Calu3 (cell line): ENCODE measurements at regions of chr21 and their contacts with region 1.

Region 1: DNA sequence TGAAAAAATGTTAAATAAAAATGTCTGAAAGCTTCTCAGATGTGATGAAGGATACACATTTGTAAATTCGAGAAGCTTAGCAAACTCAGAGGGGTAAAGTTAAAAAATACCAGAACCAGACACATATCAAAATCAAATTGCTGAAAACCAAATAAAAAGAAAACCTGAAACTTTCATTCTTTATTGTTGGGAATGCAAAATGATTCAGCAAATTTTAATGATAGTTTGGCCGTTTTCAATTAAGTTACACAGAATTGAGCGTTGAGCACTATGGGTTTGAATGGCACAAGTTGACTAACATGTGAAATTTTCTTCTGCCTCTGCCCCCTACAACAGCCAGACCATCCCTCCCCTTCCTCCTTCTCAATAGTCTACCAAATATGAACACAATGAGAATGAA is 33.5 kb upstream of the GRIK1 start:
- DNase-seq: no peak
- H3K4me3 Mint-ChIP-seq: no peak overlapping the region
- H3K27ac Mint-ChIP-seq: no peak overlapping the region
- H3K4me1 Mint-ChIP-seq: no peaks in the 10 kb centered on the region
- H3K27me3 Mint-ChIP-seq: no peaks in the 10 kb centered on the region
- CTCF ChIP-seq: no peak

Region 2: GRCh38 chr21:29775462-29775861 is 197.8 kb before region 1 on chr21:
- CTCF ChIA-PET with region 1: no interaction called
- intact Hi-C with region 1: no loop called
- DNase-seq: no peak
- H3K4me3 Mint-ChIP-seq: no peak overlapping the region
- H3K27ac Mint-ChIP-seq: no peak overlapping the region
- H3K4me1 Mint-ChIP-seq: no peaks in the 10 kb centered on the region
- H3K27me3 Mint-ChIP-seq: no peaks in the 10 kb centered on the region
- CTCF ChIP-seq: no peak

Region 3: DNA sequence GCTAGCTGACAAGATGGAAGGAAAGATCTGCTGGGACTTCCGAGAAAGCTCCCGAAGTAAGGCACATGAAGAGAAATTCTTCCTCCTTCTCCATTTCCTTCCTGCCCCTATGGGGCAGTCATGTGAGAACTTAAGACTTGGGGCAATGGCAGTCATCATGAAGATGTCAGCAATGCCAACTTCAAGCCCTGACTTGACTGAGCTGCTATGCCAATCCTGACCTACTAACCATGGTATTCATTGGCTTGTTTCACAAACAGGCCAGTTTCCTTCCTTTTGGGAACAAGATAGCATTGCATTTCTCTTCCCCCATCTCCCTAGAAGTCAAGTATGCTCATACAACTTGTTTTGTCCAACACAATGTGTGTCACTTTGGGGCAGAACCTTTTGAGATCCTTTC is 58.9 kb before region 1 on chr21:
- CTCF ChIA-PET with region 1: no interaction called
- intact Hi-C with region 1: no loop called
- DNase-seq: no peak
- H3K4me3 Mint-ChIP-seq: no peak overlapping the region
- H3K27ac Mint-ChIP-seq: no peak overlapping the region
- H3K4me1 Mint-ChIP-seq: no peaks in the 10 kb centered on the region
- H3K27me3 Mint-ChIP-seq: no peaks in the 10 kb centered on the region
- CTCF ChIP-seq: no peak

Region 4: GRCh38 chr21:29989634-29990234 is 16.5 kb after region 1 on chr21:
- CTCF ChIA-PET with region 1: no interaction called
- intact Hi-C with region 1: loop called (anchors 2 kb)
- DNase-seq: no peak
- H3K4me3 Mint-ChIP-seq: no peak overlapping the region
- H3K27ac Mint-ChIP-seq: no peak overlapping the region
- H3K4me1 Mint-ChIP-seq: no peaks in the 10 kb centered on the region
- H3K27me3 Mint-ChIP-seq: no peaks in the 10 kb centered on the region
- CTCF ChIP-seq: no peak